Activated CD4-positive, alpha-beta T cell treated with anti-CD3 and anti-CD28 coated beads, Interleukin-2, amount 10 ng/mL, durations not matched to agents 24 days and 14 days (primary cell): ENCODE measurements at regions of chr12 and their contacts with region 1.

Region 1: DNA sequence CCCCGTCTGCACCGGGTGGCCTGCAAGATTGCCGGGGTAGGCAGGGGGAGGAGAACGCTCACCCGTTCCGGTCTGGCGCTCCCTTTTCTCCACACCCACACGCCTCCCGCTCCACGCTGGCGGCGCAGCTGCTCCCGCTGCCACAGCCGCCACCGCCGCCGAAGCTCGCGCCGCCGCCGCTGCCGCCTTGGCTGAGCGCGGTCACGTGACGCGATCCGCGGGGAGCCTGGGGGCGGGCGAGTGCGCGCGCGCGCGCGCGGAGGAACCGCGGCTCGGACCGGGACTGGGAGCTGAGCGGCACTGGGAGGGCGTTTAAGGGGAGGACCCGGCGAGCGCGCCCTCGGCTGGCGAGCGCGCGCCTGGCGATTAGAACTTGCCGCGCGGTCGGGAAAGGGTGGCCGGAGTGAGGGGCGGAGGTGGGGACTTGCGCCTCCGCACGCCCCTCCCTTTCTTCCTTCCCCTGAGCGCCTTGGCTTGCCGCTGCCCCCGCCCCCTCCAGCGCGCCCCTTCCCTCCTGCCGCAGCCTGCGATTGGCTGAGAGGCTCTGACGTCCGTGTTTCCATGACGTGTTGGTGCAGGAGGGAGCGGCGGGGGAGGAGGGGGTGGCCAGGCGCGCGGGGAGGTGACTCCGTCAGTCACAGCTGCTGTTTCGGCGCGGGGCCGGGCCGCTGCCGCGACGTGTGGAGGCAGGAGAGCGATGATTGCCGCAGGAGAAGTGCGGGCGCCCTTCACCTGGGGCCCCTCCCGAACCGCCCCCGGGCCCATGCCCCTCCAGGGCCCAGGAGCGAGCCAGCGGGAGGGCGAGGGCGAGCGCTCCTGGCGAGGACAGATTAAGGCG is 738 bp upstream of the ATP2B1 start:
- DNase-seq: peak; percentile 99
- H3K4me3 Mint-ChIP-seq: peak overlapping the region; percentile 84
- H3K27ac Mint-ChIP-seq: peak overlapping the region; percentile 87
- H3K4me1 Mint-ChIP-seq: peaks cover 28% of the 10 kb centered on the region
- H3K27me3 Mint-ChIP-seq: peaks cover 33% of the 10 kb centered on the region

Region 2: DNA sequence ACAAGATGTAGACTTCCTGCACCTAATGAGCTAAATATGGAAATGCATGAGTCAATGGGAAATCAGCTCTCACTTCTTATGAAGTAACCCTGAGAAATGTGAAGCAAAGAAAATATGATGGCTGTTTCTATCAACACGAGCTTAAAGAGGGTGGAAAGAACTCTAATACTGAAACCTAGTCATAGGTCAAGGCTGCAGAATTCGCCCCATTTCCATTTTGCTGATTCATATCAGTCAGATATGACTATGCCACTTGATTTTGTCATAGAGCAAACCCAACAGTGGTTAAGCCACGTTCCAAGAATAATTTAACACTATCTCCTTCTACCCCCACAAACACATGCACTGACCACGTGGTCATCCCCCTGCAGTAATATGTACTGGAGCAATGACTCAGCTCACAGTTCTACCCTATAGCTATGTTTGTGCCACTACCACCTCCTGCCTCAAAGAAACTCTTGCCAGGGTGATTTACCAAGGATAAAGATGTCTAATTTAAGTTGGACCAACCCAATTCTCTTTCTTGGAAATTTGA is 1409.7 kb before region 1 on chr12:
- intact Hi-C with region 1: loop called (anchors 2 kb)
- DNase-seq: peak; percentile 75
- H3K4me3 Mint-ChIP-seq: peak overlapping the region; percentile 52
- H3K27ac Mint-ChIP-seq: peak overlapping the region; percentile 87
- H3K4me1 Mint-ChIP-seq: peaks cover 26% of the 10 kb centered on the region
- H3K27me3 Mint-ChIP-seq: no peaks in the 10 kb centered on the region

Region 3: GRCh38 chr12:89524541-89525285 is 184.7 kb before region 1 on chr12 and contains the start of gene GALNT4:
- intact Hi-C with region 1: loop called (anchors 1 kb)
- DNase-seq: peak; percentile 94
- H3K4me3 Mint-ChIP-seq: peak within 1 kb of the TSS; percentile 98
- H3K27ac Mint-ChIP-seq: peak within 1 kb of the TSS; percentile 99
- H3K4me1 Mint-ChIP-seq: peaks cover 49% of the 10 kb centered on the region
- H3K27me3 Mint-ChIP-seq: no peaks in the 10 kb centered on the region
- total RNA-seq, gene GALNT4: 6.9 and 7.6 TPM in 2 replicates

Region 4: GRCh38 chr12:89663577-89664357 is 45.6 kb before region 1 on chr12:
- intact Hi-C with region 1: loop called (anchors 5 kb)
- DNase-seq: no peak
- H3K4me3 Mint-ChIP-seq: peak overlapping the region; percentile 1
- H3K27ac Mint-ChIP-seq: no peak overlapping the region
- H3K4me1 Mint-ChIP-seq: peaks cover 16% of the 10 kb centered on the region
- H3K27me3 Mint-ChIP-seq: no peaks in the 10 kb centered on the region

Region 5: DNA sequence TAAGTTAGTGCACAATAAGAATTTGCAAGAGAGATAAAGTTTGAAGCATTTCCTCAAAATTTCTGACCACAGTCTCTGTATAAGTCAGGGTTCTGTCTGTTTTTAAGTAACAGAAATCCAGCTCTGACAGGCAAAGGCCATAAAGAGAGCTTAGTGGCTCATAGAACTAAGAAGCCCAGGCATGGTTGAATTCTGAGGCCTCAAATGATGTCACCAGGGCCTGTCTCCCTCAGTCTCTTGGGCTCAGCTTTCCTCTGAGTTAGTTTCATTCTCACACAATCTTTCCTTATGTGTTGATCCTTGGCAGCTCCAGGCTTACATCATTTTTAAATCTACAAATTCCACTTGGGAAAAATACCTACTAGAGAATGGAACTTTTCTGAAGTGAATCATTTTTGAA is 172.7 kb after region 1 on chr12:
- intact Hi-C with region 1: loop called (anchors 1 kb)
- DNase-seq: peak; percentile 71
- H3K4me3 Mint-ChIP-seq: peak overlapping the region; percentile 20
- H3K27ac Mint-ChIP-seq: peak overlapping the region; percentile 78
- H3K4me1 Mint-ChIP-seq: peaks cover 29% of the 10 kb centered on the region
- H3K27me3 Mint-ChIP-seq: no peaks in the 10 kb centered on the region

Region 6: GRCh38 chr12:90102957-90103652 is 393.7 kb after region 1 on chr12:
- intact Hi-C with region 1: loop called (anchors 5 kb)
- DNase-seq: peak; percentile 64
- H3K4me3 Mint-ChIP-seq: no peak overlapping the region
- H3K27ac Mint-ChIP-seq: no peak overlapping the region
- H3K4me1 Mint-ChIP-seq: peaks cover 5% of the 10 kb centered on the region
- H3K27me3 Mint-ChIP-seq: peaks cover 14% of the 10 kb centered on the region